Activated naive CD4-positive, alpha-beta T cell treated with anti-CD3 and anti-CD28 coated beads, Interleukin-2, amount 10 ng/mL, durations not matched to agents 7 days and 5 days (primary cell): ENCODE measurements at regions of chr7 and their contacts with region 1.

Region 1: DNA sequence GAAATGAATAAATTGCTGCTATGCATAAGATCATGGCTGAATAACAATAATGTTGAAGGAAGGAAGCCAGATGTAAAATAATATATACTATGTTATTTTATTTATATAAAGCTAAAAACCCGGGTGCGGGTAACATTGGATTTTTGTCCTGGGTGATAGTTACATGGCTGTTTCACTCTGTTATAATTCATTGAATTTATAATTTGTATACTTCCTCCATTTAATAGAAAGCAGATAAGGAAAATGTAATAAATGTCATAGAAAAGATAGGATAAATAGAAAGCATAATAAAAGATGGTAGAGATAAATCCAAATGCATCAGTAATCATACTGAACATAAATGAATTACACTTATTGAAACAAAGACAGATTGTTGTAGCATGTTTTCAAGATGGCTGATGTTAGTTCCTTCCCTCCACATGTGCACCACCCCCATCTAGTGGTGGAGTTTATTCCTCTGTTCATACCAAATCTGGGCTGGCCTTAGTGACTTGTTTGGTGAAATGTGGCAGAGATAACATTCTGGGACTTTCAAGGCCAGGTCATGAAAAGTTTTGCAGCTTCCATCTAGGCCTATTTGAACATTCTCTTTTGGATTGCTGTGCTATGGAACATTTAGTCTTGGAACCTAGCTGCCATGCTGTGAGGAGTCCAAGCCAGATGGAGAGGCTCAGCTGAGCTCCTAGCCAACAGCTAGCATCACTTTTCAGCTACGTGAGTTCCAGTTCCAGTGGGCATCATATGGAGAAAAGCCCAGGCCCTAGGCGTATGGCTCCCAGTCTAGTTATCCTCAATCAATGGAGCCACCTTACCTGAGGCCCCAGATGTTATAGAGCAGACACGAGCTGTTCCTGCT is 46.9 kb downstream of the AHCYL2 start:
- DNase-seq: peak; percentile 76
- H3K4me3 Mint-ChIP-seq: no peak overlapping the region
- H3K27ac Mint-ChIP-seq: no peak overlapping the region
- H3K4me1 Mint-ChIP-seq: peaks cover 2% of the 10 kb centered on the region
- H3K27me3 Mint-ChIP-seq: no peaks in the 10 kb centered on the region

Region 2: GRCh38 chr7:129224251-129225205 is 47.2 kb before region 1 on chr7 and contains the start of gene AHCYL2:
- CTCF ChIA-PET with region 1: interaction called, 185 read pairs
- DNase-seq: peak; percentile 99
- H3K4me3 Mint-ChIP-seq: peak within 1 kb of the TSS; percentile 92
- H3K27ac Mint-ChIP-seq: peak within 1 kb of the TSS; percentile 88
- H3K4me1 Mint-ChIP-seq: peaks cover 36% of the 10 kb centered on the region
- H3K27me3 Mint-ChIP-seq: peaks cover 4% of the 10 kb centered on the region

Region 3: DNA sequence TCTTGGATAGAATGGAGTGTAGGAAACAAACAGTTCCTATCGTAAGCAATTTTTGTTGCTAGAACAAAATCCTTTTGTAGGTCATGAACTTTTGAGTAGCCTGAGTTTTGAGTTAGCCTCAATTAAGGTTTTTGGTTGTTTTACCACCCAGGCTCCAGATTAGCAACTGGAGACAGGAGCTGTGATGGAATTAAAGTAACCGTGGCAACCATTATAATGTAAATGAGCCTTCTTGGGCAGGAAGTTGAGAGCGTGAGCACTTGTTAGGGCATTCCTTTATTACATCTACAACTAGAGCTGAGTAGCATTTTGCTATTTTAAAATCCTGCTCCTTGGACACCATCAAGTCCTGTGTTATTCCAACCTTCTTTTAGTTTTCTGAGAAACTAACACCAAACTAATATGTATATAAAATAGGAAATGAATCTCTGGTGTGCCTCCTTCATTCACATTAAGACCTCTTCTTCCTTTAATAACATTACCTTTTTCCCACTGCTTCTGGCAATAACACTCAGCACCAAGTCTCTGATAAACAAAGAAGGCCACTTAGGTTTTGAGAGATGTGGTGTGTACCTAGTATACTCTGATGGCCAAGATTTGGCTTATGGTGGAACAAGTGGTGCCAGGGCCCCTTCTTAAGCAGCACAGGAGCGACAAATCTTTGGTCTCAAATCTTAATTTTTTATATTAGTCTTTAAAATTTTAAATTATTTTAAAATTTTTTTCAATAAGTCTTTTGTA is 12.9 kb before region 1 on chr7:
- CTCF ChIA-PET with region 1: interaction called, 24 read pairs
- DNase-seq: no peak
- H3K4me3 Mint-ChIP-seq: no peak overlapping the region
- H3K27ac Mint-ChIP-seq: no peak overlapping the region
- H3K4me1 Mint-ChIP-seq: peaks cover 16% of the 10 kb centered on the region
- H3K27me3 Mint-ChIP-seq: no peaks in the 10 kb centered on the region

Region 4: GRCh38 chr7:129298268-129298893 is 26.7 kb after region 1 on chr7:
- CTCF ChIA-PET with region 1: interaction called, 17 read pairs
- DNase-seq: peak; percentile 73
- H3K4me3 Mint-ChIP-seq: no peak overlapping the region
- H3K27ac Mint-ChIP-seq: no peak overlapping the region
- H3K4me1 Mint-ChIP-seq: no peaks in the 10 kb centered on the region
- H3K27me3 Mint-ChIP-seq: no peaks in the 10 kb centered on the region